Calu3 (cell line): ENCODE measurements at regions of chr3 and their contacts with region 1.

Region 1: DNA sequence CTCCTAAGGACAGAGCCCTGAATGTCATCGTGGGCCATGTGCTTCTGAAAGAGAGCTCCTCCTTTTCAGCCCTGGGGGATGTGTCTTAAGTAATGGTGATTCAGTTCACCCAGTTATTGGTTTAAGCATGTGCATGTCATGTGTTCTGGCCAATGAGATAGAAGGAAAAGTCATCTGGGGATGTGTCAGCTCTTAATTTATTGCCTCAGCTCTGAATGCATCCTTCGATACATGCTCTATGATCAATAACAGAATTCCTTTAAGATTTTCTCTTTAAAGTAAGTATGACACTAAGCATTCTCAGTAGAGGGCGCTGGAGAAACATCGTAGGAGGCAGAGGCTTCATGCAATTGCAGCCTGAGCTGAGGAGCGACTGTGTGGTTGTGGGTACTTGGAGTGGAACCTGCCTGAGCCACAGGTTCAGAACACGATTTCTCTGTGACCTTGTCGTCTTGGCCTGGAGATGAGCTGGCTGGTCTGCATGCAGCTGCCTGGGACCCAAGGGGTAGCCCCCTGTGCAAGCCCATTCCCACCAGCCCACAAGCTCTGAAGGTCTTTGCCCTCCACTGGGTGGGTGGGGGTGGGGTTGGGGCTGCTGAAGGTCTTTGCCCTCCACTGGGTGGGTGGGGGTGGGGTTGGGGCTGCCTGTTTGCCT is 69.5 kb downstream of the C3orf38 start:
- DNase-seq: peak; percentile 75
- H3K4me3 Mint-ChIP-seq: no peak overlapping the region
- H3K27ac Mint-ChIP-seq: no peak overlapping the region
- H3K4me1 Mint-ChIP-seq: no peaks in the 10 kb centered on the region
- H3K27me3 Mint-ChIP-seq: no peaks in the 10 kb centered on the region
- CTCF ChIP-seq: peak; percentile 58

Region 2: GRCh38 chr3:88298189-88298588 is 78.9 kb after region 1 on chr3:
- CTCF ChIA-PET with region 1: interaction called, 4 read pairs
- intact Hi-C with region 1: loop called (anchors 5 kb)
- DNase-seq: peak; percentile 48
- H3K4me3 Mint-ChIP-seq: peak overlapping the region; percentile 13
- H3K27ac Mint-ChIP-seq: peak overlapping the region; percentile 59
- H3K4me1 Mint-ChIP-seq: peaks cover 15% of the 10 kb centered on the region
- H3K27me3 Mint-ChIP-seq: no peaks in the 10 kb centered on the region
- CTCF ChIP-seq: no peak

Region 3: GRCh38 chr3:89303701-89304100 is 1084.4 kb after region 1 on chr3:
- CTCF ChIA-PET with region 1: no interaction called
- intact Hi-C with region 1: loop called (anchors 10 kb)
- DNase-seq: no peak
- H3K4me3 Mint-ChIP-seq: no peak overlapping the region
- H3K27ac Mint-ChIP-seq: no peak overlapping the region
- H3K4me1 Mint-ChIP-seq: no peaks in the 10 kb centered on the region
- H3K27me3 Mint-ChIP-seq: no peaks in the 10 kb centered on the region
- CTCF ChIP-seq: no peak